Colonic mucosa (tissue), 4 donors: ENCODE measurements at regions of chr6 and their contacts with region 1.

Region 1: GRCh38 chr6:129498950-129499842 is 210.8 kb downstream of the ARHGAP18 start:
- DNase-seq: peak; percentile 26
- H3K4me3 ChIP-seq: no peak overlapping the region
- H3K27ac ChIP-seq: no peak overlapping the region
- H3K4me1 ChIP-seq: no peaks in the 10 kb centered on the region
- H3K27me3 ChIP-seq: no peaks in the 10 kb centered on the region
- CTCF ChIP-seq: peak; percentile 51

Region 2: GRCh38 chr6:129583866-129584265 is 84.7 kb after region 1 on chr6:
- intact Hi-C with region 1: loop called (anchors 5 kb)
- DNase-seq: no peak
- H3K4me3 ChIP-seq: no peak overlapping the region
- H3K27ac ChIP-seq: no peak overlapping the region
- H3K4me1 ChIP-seq: no peaks in the 10 kb centered on the region
- H3K27me3 ChIP-seq: no peaks in the 10 kb centered on the region
- CTCF ChIP-seq: no peak

Region 3: GRCh38 chr6:129730477-129731165 is 231.4 kb after region 1 on chr6:
- intact Hi-C with region 1: loop called (anchors 5 kb)
- DNase-seq: no peak
- H3K4me3 ChIP-seq: no peak overlapping the region
- H3K27ac ChIP-seq: no peak overlapping the region
- H3K4me1 ChIP-seq: no peaks in the 10 kb centered on the region
- H3K27me3 ChIP-seq: no peaks in the 10 kb centered on the region
- CTCF ChIP-seq: peak; percentile 54